Activated CD4-positive, alpha-beta memory T cell treated with anti-CD3 and anti-CD28 coated beads for 36 hours (primary cell): ENCODE measurements at regions of chr6 and their contacts with region 1.

Region 1: GRCh38 chr6:132483779-132484679 is 28.9 kb downstream of the STX7 start:
- DNase-seq: peak; percentile 34
- H3K4me3 Mint-ChIP-seq: no peak overlapping the region
- H3K27ac Mint-ChIP-seq: no peak overlapping the region
- H3K4me1 Mint-ChIP-seq: peaks cover 22% of the 10 kb centered on the region
- H3K27me3 Mint-ChIP-seq: no peaks in the 10 kb centered on the region

Region 2: DNA sequence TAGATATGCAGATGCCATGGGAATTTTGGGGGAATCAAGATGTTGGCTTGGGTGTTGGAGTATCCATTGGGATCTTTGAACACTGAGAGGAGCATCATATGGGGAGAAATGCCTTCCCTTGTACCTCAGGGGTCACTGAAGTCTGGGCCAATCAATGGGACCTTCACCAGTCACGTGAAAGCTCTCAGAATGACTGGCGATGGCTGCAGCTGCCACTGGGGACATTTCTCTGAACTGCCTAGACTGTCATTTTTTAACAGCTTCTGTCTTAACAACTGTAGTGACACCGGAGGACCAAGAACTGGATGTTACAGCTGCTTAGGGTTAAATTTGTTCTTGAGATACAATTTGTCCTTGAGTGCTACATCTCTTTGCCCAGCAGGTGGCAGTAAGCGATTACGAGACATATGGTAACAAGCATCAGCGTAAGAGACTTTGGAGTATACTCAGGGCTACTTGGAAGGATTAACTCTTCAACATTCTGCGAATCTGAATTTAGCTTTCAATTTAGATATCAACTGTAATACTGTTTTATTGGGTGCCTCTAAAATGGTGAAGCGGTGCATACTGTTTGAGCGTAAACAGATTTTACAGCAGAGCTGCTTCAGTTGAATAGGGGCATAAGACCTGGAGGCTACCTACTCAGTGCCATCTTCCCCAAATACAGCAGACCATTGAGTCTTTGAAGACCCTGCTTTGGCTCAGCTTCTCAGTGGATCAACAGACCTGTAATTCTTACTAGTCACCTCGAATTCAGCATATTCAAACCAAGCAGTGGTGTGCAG is 568.9 kb before region 1 on chr6:
- CTCF ChIA-PET with region 1: interaction called, 7 read pairs
- POLR2A ChIA-PET with region 1: no interaction called
- intact Hi-C with region 1: loop called (anchors 5 kb)
- DNase-seq: peak; percentile 61
- H3K4me3 Mint-ChIP-seq: no peak overlapping the region
- H3K27ac Mint-ChIP-seq: no peak overlapping the region
- H3K4me1 Mint-ChIP-seq: peaks cover 13% of the 10 kb centered on the region
- H3K27me3 Mint-ChIP-seq: peaks cover 43% of the 10 kb centered on the region

Region 3: DNA sequence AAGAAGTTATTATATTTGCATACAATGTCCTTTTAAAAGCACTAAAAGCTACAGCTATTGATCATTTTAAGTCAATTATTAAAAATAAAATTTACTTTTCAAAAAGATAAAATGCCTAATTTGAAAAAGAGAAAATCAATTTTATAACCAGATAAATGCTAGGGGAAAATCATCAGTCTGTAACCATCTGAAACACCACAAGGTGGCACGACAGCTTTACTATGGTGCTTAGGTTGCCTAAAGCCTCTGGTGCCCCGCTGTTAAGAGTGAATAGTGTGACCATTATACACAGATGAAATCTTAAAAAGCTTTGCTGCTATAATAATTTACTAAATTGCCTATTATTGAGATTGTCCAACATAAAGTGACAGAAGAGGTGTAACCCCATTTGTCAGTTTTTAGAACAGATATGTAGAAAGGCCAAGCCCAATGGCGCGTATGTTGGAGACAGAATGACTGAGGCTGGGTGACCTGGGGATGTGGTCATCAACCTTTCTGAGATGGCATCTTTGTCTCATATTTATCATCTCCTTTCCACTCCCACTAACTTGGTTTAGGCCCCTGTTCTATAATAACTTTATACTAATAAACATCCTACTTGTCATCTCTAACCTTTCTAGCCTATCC is 183.6 kb before region 1 on chr6:
- CTCF ChIA-PET with region 1: interaction called, 87 read pairs
- POLR2A ChIA-PET with region 1: no interaction called
- intact Hi-C with region 1: loop called (anchors 1 kb)
- DNase-seq: peak; percentile 21
- H3K4me3 Mint-ChIP-seq: no peak overlapping the region
- H3K27ac Mint-ChIP-seq: no peak overlapping the region
- H3K4me1 Mint-ChIP-seq: no peaks in the 10 kb centered on the region
- H3K27me3 Mint-ChIP-seq: peaks cover 12% of the 10 kb centered on the region

Region 4: DNA sequence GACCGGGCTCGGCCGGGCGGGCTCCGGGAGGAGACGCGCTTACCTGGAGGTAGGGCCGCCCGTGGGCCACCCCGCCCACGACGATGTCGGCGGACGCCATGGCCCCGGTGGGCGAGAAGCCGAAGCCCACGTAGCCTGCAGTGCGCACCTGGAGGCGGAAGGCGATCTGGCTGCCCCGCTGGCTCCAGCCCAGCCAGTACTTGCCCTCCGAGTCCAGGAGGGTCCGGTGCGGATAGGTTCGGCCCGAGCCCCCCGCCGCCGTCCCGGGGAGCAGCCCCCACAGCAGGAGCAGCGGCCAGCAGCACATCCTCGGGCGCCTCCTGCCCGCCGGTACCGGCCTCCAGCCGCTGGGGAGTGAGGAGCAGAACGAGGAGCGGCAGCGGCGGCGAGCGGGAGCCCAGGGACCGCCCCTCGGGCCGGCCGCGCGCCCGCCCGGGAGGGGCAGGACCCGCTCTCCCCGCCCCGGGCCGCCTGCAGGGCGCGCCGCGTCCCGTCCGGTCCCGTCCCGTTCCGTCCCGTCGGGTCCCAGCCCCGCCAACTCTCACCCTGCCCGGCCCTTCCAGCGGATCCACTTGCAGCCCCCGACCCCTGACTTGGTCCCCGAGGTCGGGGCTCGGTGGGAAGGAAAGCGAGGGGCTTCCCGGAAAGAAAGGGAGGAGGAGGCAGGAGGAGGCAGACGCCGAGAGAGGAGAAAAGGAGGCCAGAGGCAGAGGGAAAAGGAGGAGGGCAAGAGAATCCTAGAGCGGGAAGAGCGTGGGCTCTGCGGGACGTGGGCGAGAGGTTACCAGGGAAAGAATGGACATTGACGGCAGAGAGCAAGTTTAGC is 82.7 kb before region 1 on chr6 and contains the start of gene MOXD1:
- CTCF ChIA-PET with region 1: interaction called, 3 read pairs
- POLR2A ChIA-PET with region 1: no interaction called
- intact Hi-C with region 1: loop called (anchors 10 kb)
- DNase-seq: no peak
- H3K4me3 Mint-ChIP-seq: peak within 1 kb of the TSS; percentile 22
- H3K27ac Mint-ChIP-seq: no peak within 1 kb of the TSS
- H3K4me1 Mint-ChIP-seq: peaks cover 12% of the 10 kb centered on the region
- H3K27me3 Mint-ChIP-seq: peaks cover 41% of the 10 kb centered on the region
- total RNA-seq, gene MOXD1: not detected

Region 5: DNA sequence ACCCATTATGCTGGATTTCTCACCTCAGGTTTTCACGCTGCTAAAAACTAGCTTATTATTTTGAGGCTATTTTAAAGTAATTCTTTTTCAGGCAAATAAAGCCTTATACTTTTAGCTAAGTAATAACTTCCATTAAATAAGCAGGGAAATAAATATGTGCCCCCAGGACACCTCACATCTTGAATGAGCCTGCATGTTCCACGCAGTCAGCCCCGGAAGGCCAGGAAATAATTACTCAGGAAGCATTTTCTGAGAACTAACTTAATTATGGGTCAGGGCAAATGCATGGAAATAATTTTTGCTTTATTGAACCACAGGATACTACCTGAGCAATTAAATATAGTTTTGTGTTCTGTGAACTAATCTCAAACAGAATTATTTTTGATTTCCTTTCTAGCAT is 12.2 kb before region 1 on chr6:
- CTCF ChIA-PET with region 1: interaction called, 15 read pairs
- POLR2A ChIA-PET with region 1: no interaction called
- intact Hi-C with region 1: no loop called
- DNase-seq: no peak
- H3K4me3 Mint-ChIP-seq: no peak overlapping the region
- H3K27ac Mint-ChIP-seq: no peak overlapping the region
- H3K4me1 Mint-ChIP-seq: no peaks in the 10 kb centered on the region
- H3K27me3 Mint-ChIP-seq: no peaks in the 10 kb centered on the region

Region 6: DNA sequence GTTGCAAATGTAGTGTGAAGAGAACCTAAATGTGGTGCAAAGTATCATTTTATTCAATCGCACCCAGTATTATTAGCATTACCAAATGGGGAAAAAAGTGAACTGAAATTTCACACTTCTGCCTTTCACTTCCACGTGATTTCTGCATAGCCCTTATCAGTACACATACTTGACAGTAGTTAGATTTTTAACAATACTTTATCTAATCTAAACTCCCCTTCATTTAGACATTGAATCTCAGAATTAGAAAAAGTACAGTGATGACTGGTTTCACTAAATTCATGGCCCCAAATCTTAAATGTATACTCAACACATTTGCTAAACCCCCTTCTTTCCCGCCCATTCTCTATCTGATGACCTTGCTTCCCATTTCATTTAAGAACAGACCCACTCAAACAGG is 14.6 kb after region 1 on chr6:
- CTCF ChIA-PET with region 1: interaction called, 25 read pairs
- POLR2A ChIA-PET with region 1: no interaction called
- intact Hi-C with region 1: no loop called
- DNase-seq: no peak
- H3K4me3 Mint-ChIP-seq: no peak overlapping the region
- H3K27ac Mint-ChIP-seq: no peak overlapping the region
- H3K4me1 Mint-ChIP-seq: peaks cover 45% of the 10 kb centered on the region
- H3K27me3 Mint-ChIP-seq: no peaks in the 10 kb centered on the region